B cell (primary cell): ENCODE measurements at regions of chr1 and their contacts with region 1.

Region 1: GRCh38 chr1:199684686-199685273 is 342.7 kb upstream of the NR5A2 start:
- DNase-seq: peak; percentile 69
- ATAC-seq: peak; percentile 73
- H3K4me3 ChIP-seq: no peak overlapping the region
- H3K4me3 Mint-ChIP-seq: no peak overlapping the region
- H3K27ac ChIP-seq: no peak overlapping the region
- H3K27ac Mint-ChIP-seq: no peak overlapping the region
- H3K4me1 ChIP-seq: no peaks in the 10 kb centered on the region
- H3K4me1 Mint-ChIP-seq: no peaks in the 10 kb centered on the region
- H3K27me3 ChIP-seq: peaks cover 0 to 7% (median 6%) of the 10 kb centered on the region in 4 experiments
- H3K27me3 Mint-ChIP-seq: peaks cover 24% of the 10 kb centered on the region
- CTCF ChIP-seq: peak; percentile 92

Region 2: GRCh38 chr1:199404191-199404590 is 280.6 kb before region 1 on chr1:
- CTCF ChIA-PET with region 1: no interaction called
- POLR2A ChIA-PET with region 1: no interaction called
- intact Hi-C with region 1: no loop called
- DNase-seq: no peak
- ATAC-seq: no peak
- H3K4me3 ChIP-seq: no peak overlapping the region
- H3K4me3 Mint-ChIP-seq: no peak overlapping the region
- H3K27ac ChIP-seq: peak overlapping the region in 1 of 2 donors; percentile 21
- H3K27ac Mint-ChIP-seq: no peak overlapping the region
- H3K4me1 ChIP-seq: peaks cover 32 to 44% of the 10 kb centered on the region in 2 donors
- H3K4me1 Mint-ChIP-seq: peaks cover 53% of the 10 kb centered on the region
- H3K27me3 ChIP-seq: no peaks in the 10 kb centered on the region
- H3K27me3 Mint-ChIP-seq: no peaks in the 10 kb centered on the region
- CTCF ChIP-seq: no peak

Region 3: GRCh38 chr1:199585392-199585791 is 99.4 kb before region 1 on chr1:
- CTCF ChIA-PET with region 1: no interaction called
- POLR2A ChIA-PET with region 1: no interaction called
- intact Hi-C with region 1: no loop called
- DNase-seq: no peak
- ATAC-seq: no peak
- H3K4me3 ChIP-seq: no peak overlapping the region
- H3K4me3 Mint-ChIP-seq: no peak overlapping the region
- H3K27ac ChIP-seq: no peak overlapping the region
- H3K27ac Mint-ChIP-seq: no peak overlapping the region
- H3K4me1 ChIP-seq: no peaks in the 10 kb centered on the region
- H3K4me1 Mint-ChIP-seq: peaks cover under 1% of the 10 kb centered on the region
- H3K27me3 ChIP-seq: no peaks in the 10 kb centered on the region
- H3K27me3 Mint-ChIP-seq: peaks cover 3% of the 10 kb centered on the region
- CTCF ChIP-seq: no peak

Region 4: GRCh38 chr1:200226268-200226968 is 541.6 kb after region 1 on chr1:
- CTCF ChIA-PET with region 1: no interaction called
- POLR2A ChIA-PET with region 1: no interaction called
- intact Hi-C with region 1: no loop called
- DNase-seq: no peak
- ATAC-seq: no peak
- H3K4me3 ChIP-seq: no peak overlapping the region
- H3K4me3 Mint-ChIP-seq: no peak overlapping the region
- H3K27ac ChIP-seq: no peak overlapping the region
- H3K27ac Mint-ChIP-seq: no peak overlapping the region
- H3K4me1 ChIP-seq: peaks cover 8 to 10% of the 10 kb centered on the region in 2 donors
- H3K4me1 Mint-ChIP-seq: peaks cover 10% of the 10 kb centered on the region
- H3K27me3 ChIP-seq: peaks cover 0 to 14% (median 4%) of the 10 kb centered on the region in 4 experiments
- H3K27me3 Mint-ChIP-seq: peaks cover 21% of the 10 kb centered on the region
- CTCF ChIP-seq: no peak

Region 5: GRCh38 chr1:200279810-200280411 is 595.1 kb after region 1 on chr1:
- CTCF ChIA-PET with region 1: interaction called, 3 read pairs
- POLR2A ChIA-PET with region 1: no interaction called
- intact Hi-C with region 1: loop called (anchors 2 kb)
- DNase-seq: peak; percentile 42
- ATAC-seq: no peak
- H3K4me3 ChIP-seq: no peak overlapping the region
- H3K4me3 Mint-ChIP-seq: no peak overlapping the region
- H3K27ac ChIP-seq: no peak overlapping the region
- H3K27ac Mint-ChIP-seq: no peak overlapping the region
- H3K4me1 ChIP-seq: peaks cover 13 to 17% of the 10 kb centered on the region in 2 donors
- H3K4me1 Mint-ChIP-seq: peaks cover 8% of the 10 kb centered on the region
- H3K27me3 ChIP-seq: no peaks in the 10 kb centered on the region
- H3K27me3 Mint-ChIP-seq: no peaks in the 10 kb centered on the region
- CTCF ChIP-seq: peak; percentile 65

Region 6: DNA sequence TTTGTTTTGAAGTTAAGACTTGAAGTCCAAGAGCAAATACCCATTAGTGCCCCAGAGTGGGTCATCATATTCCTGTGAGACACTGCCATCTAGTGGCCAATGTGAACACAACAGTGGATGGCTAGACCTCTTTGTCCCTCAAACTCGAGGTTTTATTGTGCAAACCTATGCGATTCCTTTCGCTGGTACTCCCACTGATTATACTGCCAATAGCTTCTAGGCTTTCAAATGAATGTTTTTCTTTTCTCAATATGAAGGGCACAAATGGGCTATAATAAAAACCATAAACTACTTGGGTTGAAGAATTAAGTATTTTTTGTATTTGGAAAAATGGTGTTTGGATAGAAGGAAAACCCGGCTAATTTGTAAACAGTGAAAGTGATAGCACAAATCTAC is 825.4 kb after region 1 on chr1:
- CTCF ChIA-PET with region 1: interaction called, 105 read pairs
- POLR2A ChIA-PET with region 1: no interaction called
- intact Hi-C with region 1: loop called (anchors 1 kb)
- DNase-seq: peak; percentile 77
- ATAC-seq: peak; percentile 63
- H3K4me3 ChIP-seq: no peak overlapping the region
- H3K4me3 Mint-ChIP-seq: no peak overlapping the region
- H3K27ac ChIP-seq: no peak overlapping the region
- H3K27ac Mint-ChIP-seq: no peak overlapping the region
- H3K4me1 ChIP-seq: no peaks in the 10 kb centered on the region
- H3K4me1 Mint-ChIP-seq: no peaks in the 10 kb centered on the region
- H3K27me3 ChIP-seq: peaks cover 0 to 9% (median 2%) of the 10 kb centered on the region in 4 experiments
- H3K27me3 Mint-ChIP-seq: peaks cover 24% of the 10 kb centered on the region
- CTCF ChIP-seq: peak; percentile 97